ENCODE measurements at regions of chr19 and their contacts with region 1.

Region 1: DNA sequence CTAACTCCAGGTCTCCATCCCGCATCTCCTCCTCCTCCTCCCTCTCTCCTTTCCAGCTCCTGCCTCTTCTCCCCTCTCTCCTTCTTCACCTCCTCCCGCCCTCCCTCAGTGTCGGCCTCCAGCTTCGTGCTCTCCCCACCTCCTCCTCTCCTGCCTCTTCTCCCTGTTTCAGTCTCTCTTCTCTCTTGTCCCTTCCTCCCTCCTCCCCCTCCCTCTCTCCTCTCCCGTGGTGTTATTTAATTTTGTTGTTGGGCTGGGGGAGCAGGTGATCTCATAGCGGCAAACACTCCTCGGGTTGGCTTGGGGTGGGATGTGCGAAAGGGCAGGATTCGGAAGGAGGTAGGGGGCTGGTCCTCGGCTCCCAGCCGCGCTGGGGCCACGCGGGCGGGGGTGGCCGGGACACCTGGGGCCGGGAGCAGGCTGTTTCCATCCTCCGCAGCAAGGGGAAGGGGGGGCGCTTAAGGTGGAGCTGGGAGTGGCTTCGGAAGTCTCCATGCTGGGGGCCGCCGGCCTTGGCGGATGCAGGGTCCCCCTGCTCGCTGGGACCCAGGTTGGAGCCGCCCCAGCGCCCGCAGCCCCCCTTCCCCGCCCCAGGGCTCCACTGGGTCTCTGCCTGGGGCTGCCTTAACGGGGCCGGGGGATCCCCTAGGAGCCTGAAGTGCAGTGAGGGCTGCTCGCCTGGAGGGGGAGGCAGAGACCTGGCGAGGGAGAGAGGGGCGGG is at the start of gene CA11:
- DNase-seq: peak; percentile 76 to 83
- ATAC-seq: peak; percentile 86
- H3K4me3 ChIP-seq: peak within 1 kb of the TSS; percentile 67 to 94 (median 82)
- H3K27ac ChIP-seq: peak within 1 kb of the TSS; percentile 83 to 93 (median 90)
- H3K4me1 ChIP-seq: peaks cover 14 to 23% of the 10 kb centered on the region in 2 donors
- H3K27me3 ChIP-seq: no peaks in the 10 kb centered on the region
- CTCF ChIP-seq: peak; percentile 88 to 97 (median 94)
- POLR2A ChIP-seq: peak; percentile 41 to 56
- total RNA-seq, gene CA11: 1.6 to 3.5 (median 2.6) TPM

Region 2: DNA sequence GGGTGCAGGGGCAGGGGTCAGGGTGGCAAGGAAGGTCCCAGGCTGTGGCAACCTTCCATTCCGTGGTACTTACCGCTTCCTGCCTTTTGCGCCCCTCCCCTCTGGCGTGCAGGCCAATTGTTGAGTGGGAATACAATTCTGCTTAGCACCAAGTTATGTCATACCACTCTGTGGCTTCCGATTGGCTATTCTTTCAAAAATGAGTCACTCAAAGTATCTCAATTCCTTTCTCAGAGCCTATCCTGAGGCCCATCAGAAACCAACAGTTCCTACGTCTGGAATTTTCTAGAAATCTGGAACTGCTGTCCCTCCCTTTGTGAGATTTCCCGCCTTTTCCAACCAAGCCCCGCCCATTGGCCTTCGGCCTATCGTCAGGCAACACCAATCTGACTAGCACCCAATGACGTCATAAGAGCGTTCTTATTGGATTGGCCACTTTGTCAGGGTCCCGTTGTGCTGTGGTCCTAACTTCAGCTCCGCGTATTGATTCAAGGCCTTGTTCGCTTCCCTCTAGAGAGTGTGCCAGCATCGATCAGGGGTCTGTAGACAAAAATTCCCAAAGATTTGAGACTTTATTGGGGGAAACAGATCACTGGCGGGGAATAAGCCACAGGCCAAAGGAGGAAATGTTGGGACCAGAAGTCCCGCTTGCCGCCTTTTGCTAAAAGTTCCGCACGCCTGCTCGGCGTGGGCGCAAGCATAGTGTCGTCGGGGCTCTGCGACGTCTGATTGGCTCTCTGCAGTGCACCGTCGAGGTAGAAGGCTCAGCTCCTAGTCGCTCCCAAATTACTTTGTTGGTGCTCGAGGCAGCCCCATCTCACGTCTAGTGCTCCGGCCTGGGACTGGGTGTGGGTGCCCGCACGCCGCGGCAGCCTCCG is 14.9 kb after region 1 on chr19:
- in situ Hi-C with region 1: no loop called
- intact Hi-C with region 1: no loop called
- DNase-seq: peak; percentile 66 to 71
- ATAC-seq: peak; percentile 96
- H3K4me3 ChIP-seq: no peak overlapping the region
- H3K27ac ChIP-seq: peak overlapping the region in 3 of 4 donors; percentile 40 to 63 (median 47)
- H3K4me1 ChIP-seq: no peaks in the 10 kb centered on the region
- H3K27me3 ChIP-seq: no peaks in the 10 kb centered on the region
- CTCF ChIP-seq: no peak
- POLR2A ChIP-seq: no peak

Region 3: GRCh38 chr19:48674921-48675824 is 29.0 kb after region 1 on chr19:
- in situ Hi-C with region 1: no loop called
- intact Hi-C with region 1: loop called (anchors 1 kb)
- DNase-seq: peak; percentile 63 to 78
- ATAC-seq: peak; percentile 91 to 95
- H3K4me3 ChIP-seq: no peak overlapping the region
- H3K27ac ChIP-seq: peak overlapping the region in 1 of 4 donors; percentile 57
- H3K4me1 ChIP-seq: peaks cover 4 to 11% of the 10 kb centered on the region in 2 donors
- H3K27me3 ChIP-seq: no peaks in the 10 kb centered on the region
- CTCF ChIP-seq: peak; percentile 80 to 93 (median 89)
- POLR2A ChIP-seq: no peak

Region 4: DNA sequence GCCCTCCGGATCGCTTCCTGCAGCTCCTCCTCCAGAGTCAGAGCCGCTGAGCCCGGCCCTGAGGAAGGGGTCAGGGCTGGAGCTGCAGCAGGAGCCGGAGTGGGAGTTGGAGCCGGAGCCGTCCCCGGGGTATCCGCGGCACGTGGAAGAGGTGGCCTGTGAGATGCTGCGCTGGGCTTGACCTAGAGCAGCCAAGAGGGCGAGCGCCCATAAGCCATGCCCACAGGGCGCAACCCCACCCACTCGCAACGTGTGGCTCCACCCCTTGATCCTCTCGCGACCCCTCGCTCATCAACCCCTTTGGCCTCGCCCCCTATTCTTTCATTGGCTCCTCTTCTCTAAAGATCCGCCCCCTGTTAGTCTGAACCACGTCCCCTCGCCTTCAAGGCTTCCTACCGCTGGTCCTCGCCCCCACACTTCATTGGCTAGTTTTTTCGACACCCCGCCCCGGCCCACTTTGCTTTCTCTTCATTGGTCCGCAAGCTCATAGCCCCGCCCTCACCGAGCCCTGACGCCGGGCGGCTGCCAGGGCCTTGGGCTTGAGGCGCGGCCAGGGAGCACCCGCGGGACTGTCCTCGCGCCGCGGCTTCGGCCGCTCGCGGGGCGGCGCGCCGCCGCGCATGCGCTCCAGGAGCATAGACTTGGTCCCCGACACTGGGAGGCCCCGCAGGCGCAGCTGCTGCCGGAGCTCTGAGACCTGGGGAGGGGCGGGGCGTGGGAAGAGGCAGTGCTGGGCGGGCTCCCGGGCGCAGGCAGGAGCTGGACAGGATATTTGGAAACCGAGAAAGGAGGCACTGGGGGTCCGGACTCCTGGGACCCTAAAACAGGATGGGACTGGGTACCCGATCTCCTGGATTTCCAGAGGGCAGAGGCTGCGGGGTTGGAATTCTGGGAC is 68.0 kb after region 1 on chr19:
- in situ Hi-C with region 1: loop called in 1 of 4 experiments (anchors 10 kb)
- intact Hi-C with region 1: loop called (anchors 5 kb)
- DNase-seq: peak; percentile 98 to 99
- ATAC-seq: peak; percentile 88 to 94
- H3K4me3 ChIP-seq: peak overlapping the region; percentile 47 to 65 (median 60)
- H3K27ac ChIP-seq: peak overlapping the region; percentile 88 to 98 (median 94)
- H3K4me1 ChIP-seq: peaks cover 39 to 43% of the 10 kb centered on the region in 2 donors
- H3K27me3 ChIP-seq: no peaks in the 10 kb centered on the region
- CTCF ChIP-seq: no peak
- POLR2A ChIP-seq: peak; percentile 60 to 73

Region 5: DNA sequence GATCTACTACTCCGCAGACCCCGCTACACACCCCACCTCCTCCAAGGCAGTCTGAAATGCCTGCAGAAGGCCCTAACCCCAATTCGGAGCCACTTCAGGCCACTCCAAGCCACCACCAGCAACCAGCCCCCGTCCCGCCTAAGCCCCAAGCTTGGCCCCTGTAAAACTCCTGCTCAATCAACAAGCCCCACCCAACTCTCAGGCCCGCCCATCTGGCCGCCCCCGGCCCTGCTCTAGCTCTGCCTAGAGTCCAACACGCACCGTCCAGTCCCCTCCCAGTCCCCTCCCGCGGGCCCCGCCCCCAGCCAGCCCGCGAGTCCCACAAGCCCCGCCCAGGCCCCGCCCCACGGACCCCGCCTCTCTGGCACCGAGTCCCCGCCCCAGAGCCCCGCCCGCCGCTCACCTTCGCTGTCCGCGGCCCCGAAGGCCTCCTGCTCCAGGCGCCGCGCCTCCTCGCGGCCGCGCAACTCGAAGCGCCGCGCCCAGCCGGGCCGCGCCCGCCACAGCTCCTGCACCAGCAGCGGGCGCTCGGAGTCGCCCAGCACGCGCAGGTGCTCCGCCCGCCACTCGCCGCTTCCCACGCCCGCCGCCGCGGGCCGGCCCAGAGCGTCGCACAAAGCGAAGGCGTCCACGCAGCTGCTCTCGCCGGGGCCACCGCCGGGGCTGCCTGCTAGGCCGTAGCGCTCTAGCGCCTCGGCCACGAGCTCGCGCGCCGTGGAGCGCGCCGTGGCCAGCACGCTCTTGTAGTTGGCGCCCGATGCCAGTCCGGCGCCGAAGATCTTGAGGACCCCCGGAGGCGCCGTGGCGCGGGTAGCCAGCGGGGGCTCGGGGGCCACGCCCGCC is 92.6 kb after region 1 on chr19:
- in situ Hi-C with region 1: loop called in 2 of 4 experiments (anchors 10 to 25 kb)
- intact Hi-C with region 1: loop called (anchors 1 kb)
- DNase-seq: peak; percentile 88 to 91
- ATAC-seq: peak; percentile 76 to 79
- H3K4me3 ChIP-seq: peak overlapping the region; percentile 50 to 75 (median 56)
- H3K27ac ChIP-seq: peak overlapping the region; percentile 79 to 88 (median 86)
- H3K4me1 ChIP-seq: peaks cover 3 to 16% of the 10 kb centered on the region in 2 donors
- H3K27me3 ChIP-seq: no peaks in the 10 kb centered on the region
- CTCF ChIP-seq: peak in 4 of 5 experiments; percentile 55 to 84 (median 74)
- POLR2A ChIP-seq: peak; percentile 55 to 66

Region 6: GRCh38 chr19:48746738-48747575 is 100.8 kb after region 1 on chr19 and contains the start of gene IZUMO1:
- in situ Hi-C with region 1: loop called in 2 of 4 experiments (anchors 10 to 25 kb)
- intact Hi-C with region 1: no loop called
- DNase-seq: peak; percentile 68 to 77
- ATAC-seq: peak; percentile 87 to 95
- H3K4me3 ChIP-seq: peak within 1 kb of the TSS; percentile 41 to 56 (median 48)
- H3K27ac ChIP-seq: peak within 1 kb of the TSS; percentile 73 to 82 (median 80)
- H3K4me1 ChIP-seq: peaks cover 4 to 5% of the 10 kb centered on the region in 2 donors
- H3K27me3 ChIP-seq: no peaks in the 10 kb centered on the region
- CTCF ChIP-seq: no peak
- POLR2A ChIP-seq: peak in 1 of 2 donors; percentile 53
- total RNA-seq, gene IZUMO1: 2.1 TPM in 1 of 4 donors, not detected in the others

Region 7: GRCh38 chr19:48842789-48843162 is 196.6 kb after region 1 on chr19:
- in situ Hi-C with region 1: loop called in 1 of 4 experiments (anchors 5 kb)
- intact Hi-C with region 1: loop called (anchors 2 kb)
- DNase-seq: peak in 1 of 2 donors; percentile 27
- ATAC-seq: peak; percentile 43 to 75
- H3K4me3 ChIP-seq: no peak overlapping the region
- H3K27ac ChIP-seq: no peak overlapping the region
- H3K4me1 ChIP-seq: no peaks in the 10 kb centered on the region
- H3K27me3 ChIP-seq: no peaks in the 10 kb centered on the region
- CTCF ChIP-seq: peak; percentile 70 to 93 (median 86)
- POLR2A ChIP-seq: no peak